ENCODE measurements at regions of chr5 and their contacts with region 1.

Region 1: DNA sequence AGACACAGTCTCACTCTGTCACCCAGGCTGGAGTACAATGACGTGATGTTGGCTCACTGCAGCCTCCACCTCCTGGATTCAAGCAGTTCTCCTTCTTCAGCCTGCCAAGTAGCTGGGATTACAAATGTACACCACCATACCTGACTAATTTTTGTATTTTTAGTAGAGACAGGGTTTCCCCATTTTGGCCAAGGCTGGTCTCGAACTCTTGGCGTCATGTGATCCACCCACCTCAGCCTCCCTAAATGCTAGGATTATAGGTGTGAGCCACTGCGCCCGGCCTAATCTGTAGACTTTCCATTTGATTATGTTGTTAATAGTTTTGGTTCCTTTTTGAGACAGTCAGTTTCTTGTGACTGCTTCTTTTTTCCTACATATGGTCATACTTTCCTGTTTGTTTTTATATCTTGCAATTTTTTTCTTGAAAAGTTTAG is 31.0 kb downstream of the MTREX start:
- DNase-seq: peak; percentile 83
- ATAC-seq: peak; percentile 89
- H3K4me3 Mint-ChIP-seq: peak overlapping the region; percentile 4
- H3K27ac Mint-ChIP-seq: peak overlapping the region; percentile 42
- H3K4me1 Mint-ChIP-seq: peaks cover 28% of the 10 kb centered on the region
- H3K27me3 Mint-ChIP-seq: no peaks in the 10 kb centered on the region

Region 2: DNA sequence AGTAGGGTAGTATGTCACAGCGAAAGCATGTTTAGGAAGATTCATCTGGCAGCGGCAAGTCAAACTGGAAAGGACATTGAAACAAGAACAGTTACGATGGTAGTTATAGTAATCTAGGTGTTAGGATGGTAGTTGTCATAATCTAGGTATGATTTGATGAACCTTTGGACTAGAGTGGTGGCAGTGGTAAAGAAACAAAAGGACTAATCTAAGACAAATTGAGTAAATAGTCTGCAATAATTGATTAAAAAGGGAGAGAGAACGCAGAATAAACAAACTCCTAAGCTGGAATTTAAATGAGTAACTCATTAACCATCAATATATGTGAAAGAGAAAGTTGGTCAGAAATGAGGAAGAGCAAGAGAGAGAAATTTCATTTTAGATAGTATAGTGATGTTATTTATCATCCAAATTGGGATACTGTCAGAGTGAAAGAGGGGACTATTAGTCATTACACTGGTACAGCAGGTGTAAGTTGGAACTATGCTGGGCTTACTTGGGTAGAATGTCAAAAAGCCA is 25.8 kb after region 1 on chr5:
- CTCF ChIA-PET with region 1: interaction called, 6 read pairs
- POLR2A ChIA-PET with region 1: interaction called, 3 read pairs
- intact Hi-C with region 1: loop called in 1 of 2 experiments (anchors 2 kb)
- DNase-seq: peak; percentile 31
- ATAC-seq: peak; percentile 94
- H3K4me3 Mint-ChIP-seq: peak overlapping the region; percentile 2
- H3K27ac Mint-ChIP-seq: peak overlapping the region; percentile 69
- H3K4me1 Mint-ChIP-seq: peaks cover 22% of the 10 kb centered on the region
- H3K27me3 Mint-ChIP-seq: no peaks in the 10 kb centered on the region